ENCODE measurements at regions of chr2 and their contacts with region 1.

Region 1: DNA sequence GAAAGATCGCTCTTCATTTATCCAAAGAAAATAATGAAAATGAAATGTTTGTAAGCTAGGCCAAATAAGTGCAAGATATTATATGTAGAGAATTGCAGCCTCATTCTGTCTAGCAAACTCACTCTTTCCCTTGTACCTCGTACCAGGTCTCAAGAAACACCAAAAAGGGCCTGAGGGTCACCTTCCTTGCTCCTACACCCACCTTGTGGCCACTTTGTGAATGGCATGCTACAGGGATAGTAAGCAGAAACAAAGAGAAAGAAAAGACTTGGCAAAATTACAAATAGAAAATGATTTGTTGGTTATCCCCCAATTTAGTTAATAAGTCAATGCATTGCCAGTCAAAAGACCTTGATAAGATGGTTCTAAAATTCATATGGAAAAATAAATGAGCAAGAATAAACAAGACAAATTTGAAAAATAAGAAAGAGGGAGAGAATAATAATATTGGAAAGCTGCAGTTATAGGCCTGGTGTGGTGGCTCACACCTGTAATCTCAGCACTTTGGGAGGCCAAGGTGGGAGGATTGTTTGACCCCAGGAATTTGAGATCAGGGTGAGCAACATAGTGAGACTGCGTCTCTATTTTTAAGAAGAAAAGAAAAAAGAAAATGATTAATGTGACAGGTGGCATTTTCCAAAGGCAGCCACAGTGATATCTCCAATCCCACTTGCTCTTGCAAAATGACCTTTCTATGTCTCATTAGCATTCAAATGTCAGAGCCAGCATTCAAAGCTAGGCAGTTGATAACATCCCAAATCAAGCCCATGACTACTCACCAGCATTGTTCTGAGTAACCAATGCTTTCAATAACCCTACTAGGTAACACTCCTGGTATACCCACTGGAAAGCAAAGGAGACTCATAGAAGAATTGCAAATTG is 38.8 kb upstream of the BMP10 start:
- DNase-seq: peak; percentile 80
- H3K4me3 Mint-ChIP-seq: no peak overlapping the region
- H3K27ac Mint-ChIP-seq: peak overlapping the region; percentile 69
- H3K4me1 Mint-ChIP-seq: peaks cover 43% of the 10 kb centered on the region
- H3K27me3 Mint-ChIP-seq: no peaks in the 10 kb centered on the region

Region 2: DNA sequence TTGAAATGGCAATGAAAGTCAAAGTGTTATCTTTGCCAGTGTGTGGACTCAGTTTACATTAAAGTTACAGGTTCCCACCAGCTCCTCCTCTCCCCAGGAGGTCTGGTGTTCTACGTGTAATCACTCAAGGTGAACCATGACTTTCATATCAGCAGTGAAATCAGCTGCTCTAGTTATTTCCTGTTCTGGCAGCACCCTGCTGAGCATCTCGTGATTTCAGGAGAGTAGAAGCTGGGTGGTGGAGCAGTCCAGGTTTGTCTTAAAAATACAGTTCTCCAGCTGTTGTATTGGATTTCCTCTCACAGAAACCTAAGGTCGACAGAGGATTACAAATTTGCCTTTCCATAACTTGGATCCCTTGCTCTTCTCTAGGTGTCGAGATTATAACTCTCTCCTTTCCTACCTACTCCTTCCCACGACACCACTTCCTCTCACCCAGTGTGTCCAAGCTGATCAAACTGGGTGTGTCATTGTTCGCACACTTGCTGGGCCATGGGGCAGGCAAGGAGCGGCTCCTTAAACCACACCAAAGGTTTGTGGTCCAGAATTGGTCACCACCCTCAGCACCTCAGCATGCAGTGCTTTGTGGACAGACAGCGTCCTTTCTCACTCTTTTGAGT is 188.4 kb before region 1 on chr2:
- CTCF ChIA-PET with region 1: interaction called, 7 read pairs
- POLR2A ChIA-PET with region 1: interaction called, 17 read pairs
- DNase-seq: peak; percentile 67
- H3K4me3 Mint-ChIP-seq: peak overlapping the region; percentile 58
- H3K27ac Mint-ChIP-seq: peak overlapping the region; percentile 95
- H3K4me1 Mint-ChIP-seq: peaks cover 99% of the 10 kb centered on the region
- H3K27me3 Mint-ChIP-seq: no peaks in the 10 kb centered on the region

Region 3: DNA sequence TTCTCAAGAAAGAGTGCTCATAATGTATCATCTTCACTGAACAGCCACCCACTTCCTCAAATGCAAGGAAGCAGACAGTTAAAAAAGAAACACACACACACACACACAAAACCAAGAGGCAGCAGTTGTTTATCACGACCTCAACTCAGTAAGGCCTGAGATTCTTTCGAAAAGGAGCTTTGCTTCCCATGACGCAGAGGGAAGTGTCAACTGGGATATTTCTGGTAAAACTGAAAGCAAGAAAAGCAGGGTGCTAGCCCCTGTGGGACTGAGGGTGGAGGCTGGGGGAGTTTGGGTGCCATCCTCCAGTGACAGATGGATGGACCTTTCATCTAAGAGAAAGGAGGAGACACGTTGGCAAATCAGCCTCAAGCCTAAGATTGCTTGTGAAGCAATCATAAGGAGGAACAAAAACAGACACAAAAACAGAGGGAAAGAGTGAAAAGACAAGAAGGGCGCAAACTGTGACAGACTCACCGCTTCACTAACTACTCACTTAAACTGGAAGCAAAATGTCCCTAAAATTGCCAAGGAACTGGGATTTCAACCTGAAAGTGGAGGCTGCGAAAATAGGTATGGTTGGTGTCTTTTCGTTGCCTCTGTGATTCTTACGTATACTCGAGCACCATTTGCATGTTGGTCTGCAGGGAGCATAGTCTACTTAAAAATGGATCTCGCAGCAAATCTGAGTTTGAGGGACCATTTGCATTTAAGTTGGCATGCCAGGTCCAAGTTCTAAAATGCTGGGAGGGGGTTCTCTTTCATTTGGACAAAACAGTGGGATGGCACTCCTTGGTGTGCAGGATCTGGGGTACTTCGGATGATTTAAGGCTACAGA is 175.1 kb before region 1 on chr2 and contains the start of gene ARHGAP25:
- CTCF ChIA-PET with region 1: interaction called, 10 read pairs
- POLR2A ChIA-PET with region 1: interaction called, 17 read pairs
- DNase-seq: peak; percentile 68
- H3K4me3 Mint-ChIP-seq: no peak within 1 kb of the TSS
- H3K27ac Mint-ChIP-seq: no peak within 1 kb of the TSS
- H3K4me1 Mint-ChIP-seq: peaks cover 34% of the 10 kb centered on the region
- H3K27me3 Mint-ChIP-seq: no peaks in the 10 kb centered on the region
- total RNA-seq, gene ARHGAP25: 128 to 132 TPM

Region 4: DNA sequence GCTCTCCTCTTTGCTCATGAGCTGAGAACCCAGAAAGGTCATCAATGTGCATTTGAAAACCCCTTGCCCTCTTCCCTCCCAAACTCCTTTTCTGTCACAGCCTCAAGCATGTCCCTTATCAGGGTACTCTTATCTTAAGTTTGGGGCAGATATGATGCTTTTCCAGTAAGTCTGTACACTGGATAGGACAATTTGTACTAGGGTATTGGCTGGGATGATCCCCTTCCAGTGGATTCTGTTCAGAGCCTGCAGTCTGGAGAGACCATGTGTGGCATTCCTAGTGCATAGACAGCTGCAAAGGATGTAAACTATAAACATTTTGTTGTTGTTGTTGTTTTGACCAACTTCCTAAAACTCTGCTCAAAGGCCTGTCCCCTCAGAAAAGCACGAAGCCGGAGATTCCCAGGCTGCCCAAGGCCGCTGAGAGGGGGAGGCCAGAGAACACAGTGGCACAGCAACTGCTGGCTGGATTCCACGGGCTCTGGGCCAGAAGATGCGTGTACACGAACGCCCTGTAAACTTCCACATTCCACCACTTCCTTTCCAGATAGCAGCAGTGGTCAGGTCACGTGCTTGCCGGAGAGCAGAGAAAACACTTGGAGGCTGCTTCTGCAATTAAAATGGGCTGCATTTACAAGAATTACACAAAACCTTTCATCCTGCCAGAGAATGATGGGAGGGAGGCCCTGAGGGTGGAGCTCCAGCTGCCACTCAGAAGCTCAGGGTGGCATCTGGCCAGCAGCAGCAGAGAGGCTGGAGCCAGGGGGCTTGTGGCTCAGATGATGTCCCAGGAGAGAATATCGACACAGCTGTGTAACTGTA is 80.9 kb before region 1 on chr2:
- CTCF ChIA-PET with region 1: interaction called, 14 read pairs
- POLR2A ChIA-PET with region 1: interaction called, 8 read pairs
- DNase-seq: peak; percentile 83
- H3K4me3 Mint-ChIP-seq: peak overlapping the region; percentile 61
- H3K27ac Mint-ChIP-seq: peak overlapping the region; percentile 93
- H3K4me1 Mint-ChIP-seq: peaks cover 69% of the 10 kb centered on the region
- H3K27me3 Mint-ChIP-seq: no peaks in the 10 kb centered on the region

Region 5: DNA sequence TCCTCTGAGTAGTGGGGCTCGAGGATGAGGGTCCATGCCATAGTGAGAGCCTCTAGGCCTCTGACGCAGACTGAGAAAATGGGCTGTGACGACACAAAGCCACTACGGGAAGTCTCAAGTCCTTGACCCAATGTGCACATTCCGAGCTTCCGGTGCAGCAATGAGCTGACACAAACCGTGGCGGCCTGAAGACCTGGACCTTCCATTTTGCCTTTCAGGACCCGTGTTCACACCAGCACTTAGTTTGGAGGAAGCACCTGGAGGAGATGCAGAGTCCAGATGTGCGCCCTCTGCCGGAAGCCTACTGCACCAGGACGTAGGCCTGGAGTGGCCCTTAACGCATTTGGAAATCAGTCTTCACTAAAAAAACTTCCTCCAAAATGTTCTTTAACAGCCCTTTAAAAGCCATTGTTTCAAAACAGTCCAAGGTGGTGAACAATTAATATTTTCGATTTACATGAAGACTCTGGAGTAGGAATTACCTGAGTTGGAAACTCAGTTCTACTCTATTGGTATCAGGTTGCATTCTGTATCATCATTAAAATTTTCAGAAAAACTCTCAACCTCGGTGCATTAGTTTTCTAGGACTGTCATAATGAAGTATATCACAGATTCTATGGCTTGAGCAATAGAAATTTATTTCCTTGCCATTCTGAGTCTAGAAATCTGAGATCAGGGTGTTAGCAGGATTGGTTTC is 72.7 kb before region 1 on chr2:
- CTCF ChIA-PET with region 1: interaction called, 15 read pairs
- POLR2A ChIA-PET with region 1: interaction called, 10 read pairs
- DNase-seq: peak; percentile 67
- H3K4me3 Mint-ChIP-seq: no peak overlapping the region
- H3K27ac Mint-ChIP-seq: peak overlapping the region; percentile 28
- H3K4me1 Mint-ChIP-seq: peaks cover 43% of the 10 kb centered on the region
- H3K27me3 Mint-ChIP-seq: peaks cover 4% of the 10 kb centered on the region

Region 6: DNA sequence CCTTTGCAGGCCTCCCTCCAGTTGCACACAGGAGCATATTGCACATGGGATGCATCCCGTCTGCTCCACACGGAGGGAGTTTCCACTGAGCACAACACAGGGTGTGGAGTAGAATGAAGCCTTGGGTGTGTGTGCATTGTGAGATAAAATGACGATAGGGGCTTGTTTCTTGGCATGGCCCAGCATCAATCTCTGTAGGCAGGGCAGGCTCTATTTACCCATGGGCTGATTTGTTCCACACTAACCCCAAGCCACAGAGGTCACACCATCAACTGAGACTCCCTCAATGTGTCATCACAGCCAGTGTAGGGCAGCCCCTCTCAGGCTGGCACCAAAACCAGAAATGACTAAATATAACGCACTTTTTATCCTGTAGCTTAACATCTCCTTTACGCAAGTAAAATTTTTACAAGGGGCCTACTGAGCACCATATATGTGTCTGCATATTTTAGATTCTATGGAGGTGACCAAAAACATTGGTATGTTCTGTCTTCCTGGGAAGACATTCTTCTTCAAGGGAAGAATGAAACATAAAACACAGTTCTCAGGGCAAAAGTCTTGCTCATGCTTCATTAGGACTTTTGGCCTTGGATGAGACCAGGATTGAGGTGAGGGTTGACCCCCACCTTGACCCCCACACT is 61.7 kb after region 1 on chr2:
- CTCF ChIA-PET with region 1: no interaction called
- POLR2A ChIA-PET with region 1: no interaction called
- DNase-seq: no peak
- H3K4me3 Mint-ChIP-seq: no peak overlapping the region
- H3K27ac Mint-ChIP-seq: no peak overlapping the region
- H3K4me1 Mint-ChIP-seq: no peaks in the 10 kb centered on the region
- H3K27me3 Mint-ChIP-seq: peaks cover 28% of the 10 kb centered on the region

Region 7: GRCh38 chr2:69073928-69074570 is 164.0 kb after region 1 on chr2:
- CTCF ChIA-PET with region 1: no interaction called
- POLR2A ChIA-PET with region 1: no interaction called
- DNase-seq: no peak
- H3K4me3 Mint-ChIP-seq: no peak overlapping the region
- H3K27ac Mint-ChIP-seq: no peak overlapping the region
- H3K4me1 Mint-ChIP-seq: no peaks in the 10 kb centered on the region
- H3K27me3 Mint-ChIP-seq: peaks cover 36% of the 10 kb centered on the region

Measured in activated CD4-positive, alpha-beta memory T cell treated with anti-CD3 and anti-CD28 coated beads, Interleukin-2, amount 10 ng/mL, durations not matched to agents 7 days and 5 days (primary cell).